ENCODE measurements at regions of chr17 and their contacts with region 1.

Region 1: DNA sequence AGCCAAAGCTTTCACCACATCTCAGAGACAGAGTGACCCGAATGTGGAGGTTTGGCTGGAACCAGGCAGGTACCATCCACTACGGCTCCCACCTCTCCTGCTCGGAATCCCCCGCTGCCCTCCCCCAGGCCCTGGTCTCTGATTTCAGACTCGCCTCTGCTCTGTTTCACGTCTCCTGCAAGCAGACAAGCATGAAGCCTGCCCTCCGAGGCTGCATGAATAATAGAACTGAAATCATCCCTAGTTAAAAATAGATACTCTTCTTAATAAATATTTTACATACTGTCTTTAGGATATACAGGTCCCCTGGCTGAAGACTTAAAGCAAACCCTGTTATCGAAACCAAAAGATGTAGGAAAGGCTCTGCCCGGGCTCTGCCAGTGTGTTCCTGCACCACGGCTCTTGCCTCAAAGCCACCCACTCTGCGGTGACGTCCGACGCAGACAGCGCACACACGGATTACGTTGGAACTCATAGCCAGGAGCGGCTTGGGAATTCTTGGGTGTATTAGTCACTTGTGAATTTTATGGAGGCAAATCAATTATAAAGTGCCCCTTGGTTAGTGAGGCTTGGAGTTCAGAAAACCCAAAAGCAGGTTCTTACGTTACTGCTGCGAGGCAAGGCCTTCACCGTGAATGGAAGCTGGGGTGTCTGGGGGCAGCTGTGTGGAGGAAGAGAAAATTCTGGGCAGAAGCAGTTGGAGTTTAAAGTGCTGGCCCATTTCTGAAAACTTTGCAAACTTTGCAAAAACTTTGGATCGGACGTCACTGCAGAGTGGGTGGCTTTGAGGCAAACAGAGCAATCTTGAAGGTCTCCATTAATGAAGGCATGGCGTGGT is 25.6 kb upstream of the NPTX1 start:
- DNase-seq: peak; percentile 90
- H3K4me3 Mint-ChIP-seq: peak overlapping the region; percentile 68
- H3K27ac Mint-ChIP-seq: peak overlapping the region; percentile 89
- H3K4me1 Mint-ChIP-seq: peaks cover 12% of the 10 kb centered on the region
- H3K27me3 Mint-ChIP-seq: no peaks in the 10 kb centered on the region
- CTCF ChIP-seq: no peak

Region 2: GRCh38 chr17:80441133-80441578 is 60.8 kb before region 1 on chr17:
- CTCF ChIA-PET with region 1: no interaction called
- POLR2A ChIA-PET with region 1: no interaction called
- intact Hi-C with region 1: no loop called
- DNase-seq: peak; percentile 47
- H3K4me3 Mint-ChIP-seq: no peak overlapping the region
- H3K27ac Mint-ChIP-seq: no peak overlapping the region
- H3K4me1 Mint-ChIP-seq: no peaks in the 10 kb centered on the region
- H3K27me3 Mint-ChIP-seq: no peaks in the 10 kb centered on the region
- CTCF ChIP-seq: no peak

Region 3: DNA sequence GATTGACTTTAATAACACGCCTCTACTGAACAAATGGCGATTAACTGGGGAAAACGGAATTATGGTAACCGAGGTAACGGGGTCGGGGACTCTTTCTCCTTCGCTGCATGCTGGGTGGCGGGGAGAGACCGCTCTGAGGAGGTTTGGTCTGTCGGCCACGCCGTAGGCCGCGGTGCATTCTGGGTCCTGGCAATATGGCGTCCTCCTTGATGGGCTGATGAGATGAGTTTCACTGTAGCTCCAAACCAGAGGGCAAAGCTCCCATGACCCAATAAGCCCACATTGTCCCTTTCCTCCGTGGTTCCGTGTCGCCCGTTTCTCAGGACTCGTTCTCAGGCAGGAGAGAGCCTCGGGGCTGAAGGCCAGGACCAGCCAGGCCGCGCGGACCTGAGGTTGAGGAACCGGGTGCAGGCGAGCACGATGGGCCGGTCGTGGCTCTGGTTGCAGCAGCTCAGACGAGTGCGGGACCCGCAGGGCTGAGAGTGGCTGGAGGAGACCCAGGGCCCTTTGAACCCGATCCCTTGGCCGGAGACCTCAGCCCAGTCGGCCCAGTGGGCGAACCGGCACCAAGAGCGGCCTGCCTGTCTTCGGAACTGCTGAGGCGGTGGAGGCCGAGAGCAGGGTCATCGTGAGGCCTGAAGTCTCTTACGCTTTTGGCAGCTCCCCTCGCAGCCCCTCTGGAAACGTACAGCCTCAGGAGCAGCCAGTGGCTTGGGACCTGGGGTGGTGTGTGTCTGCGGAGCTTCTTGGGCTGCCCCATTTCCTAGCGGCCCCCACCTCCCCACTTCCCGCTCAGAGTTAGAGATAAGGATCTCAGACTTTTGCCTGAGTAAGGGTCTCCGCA is 42.9 kb after region 1 on chr17 and contains the start of gene RPTOR:
- CTCF ChIA-PET with region 1: no interaction called
- POLR2A ChIA-PET with region 1: interaction called, 21 read pairs
- intact Hi-C with region 1: no loop called
- DNase-seq: peak; percentile 87
- H3K4me3 Mint-ChIP-seq: peak within 1 kb of the TSS; percentile 82
- H3K27ac Mint-ChIP-seq: peak within 1 kb of the TSS; percentile 90
- H3K4me1 Mint-ChIP-seq: peaks cover 21% of the 10 kb centered on the region
- H3K27me3 Mint-ChIP-seq: no peaks in the 10 kb centered on the region
- CTCF ChIP-seq: no peak
- total RNA-seq, gene RPTOR: 41.3 and 46.6 TPM in 2 replicates

Measured in MCF 10A (cell line).